SK-N-SH (cell line): ENCODE measurements at regions of chr3 and their contacts with region 1.

Region 1: DNA sequence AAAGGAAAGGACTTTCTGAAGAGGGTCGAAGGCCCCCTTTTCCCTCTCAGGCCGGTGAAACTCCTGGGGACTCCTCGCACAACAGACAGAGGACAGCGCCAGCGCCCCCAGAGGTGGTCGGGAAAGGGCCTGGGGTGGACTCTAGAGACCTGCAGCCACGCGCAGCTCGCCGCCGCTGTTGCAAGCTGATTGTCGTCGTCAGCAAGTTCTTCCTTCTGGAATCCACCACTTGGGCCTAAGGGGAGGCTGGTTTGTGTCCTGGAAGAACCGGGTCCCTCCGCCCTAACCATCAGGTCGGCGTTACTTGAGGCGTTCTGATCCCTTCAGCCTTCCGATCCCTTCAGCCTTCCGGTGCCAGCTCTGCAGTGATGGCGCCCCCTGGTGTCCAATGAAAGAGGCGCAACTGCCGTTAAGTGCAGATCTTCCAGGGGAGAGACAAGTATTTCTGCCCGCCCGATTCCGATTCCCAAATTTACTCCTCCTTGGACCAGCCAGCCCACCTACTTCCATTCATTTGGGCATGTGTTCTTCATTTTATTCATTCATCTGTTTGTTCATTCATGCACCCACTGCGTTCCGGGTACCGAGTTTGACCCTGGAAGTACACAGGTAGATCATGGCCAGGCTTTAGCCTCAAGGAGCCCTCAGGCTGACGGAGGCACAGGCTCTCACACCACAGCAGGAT is 77.2 kb upstream of the SLC6A11 start:
- DNase-seq: peak; percentile 81
- H3K4me3 ChIP-seq: peak overlapping the region; percentile 45 to 59; a peak in 3 of 4 replicates
- H3K27ac ChIP-seq: no peak overlapping the region
- H3K4me1 ChIP-seq: peaks cover 0 to 5% of the 10 kb centered on the region in 2 experiments; a peak in 1 of 4 replicates
- H3K27me3 ChIP-seq: no peaks in the 10 kb centered on the region
- CTCF ChIP-seq: peak; percentile 84
- EP300 ChIP-seq: no peak
- RAD21 ChIP-seq: peak; percentile 71

Region 2: GRCh38 chr3:10334459-10334858 is 404.4 kb before region 1 on chr3:
- CTCF ChIA-PET with region 1: interaction called, 166 read pairs
- POLR2A ChIA-PET with region 1: no interaction called
- DNase-seq: no peak
- H3K4me3 ChIP-seq: no peak overlapping the region
- H3K27ac ChIP-seq: no peak overlapping the region
- H3K4me1 ChIP-seq: no peaks in the 10 kb centered on the region
- H3K27me3 ChIP-seq: peaks cover 32% of the 10 kb centered on the region; the same call in 1 of the 2 replicates
- CTCF ChIP-seq: no peak; the same call in 1 of the 2 replicates
- EP300 ChIP-seq: no peak
- RAD21 ChIP-seq: no peak

Region 3: GRCh38 chr3:10408680-10409079 is 330.1 kb before region 1 on chr3:
- CTCF ChIA-PET with region 1: interaction called, 133 read pairs
- POLR2A ChIA-PET with region 1: no interaction called
- DNase-seq: no peak
- H3K4me3 ChIP-seq: no peak overlapping the region
- H3K27ac ChIP-seq: no peak overlapping the region
- H3K4me1 ChIP-seq: no peaks in the 10 kb centered on the region
- H3K27me3 ChIP-seq: no peaks in the 10 kb centered on the region
- CTCF ChIP-seq: no peak
- EP300 ChIP-seq: no peak
- RAD21 ChIP-seq: no peak

Region 4: GRCh38 chr3:10432156-10432845 is 306.5 kb before region 1 on chr3:
- CTCF ChIA-PET with region 1: interaction called, 11 read pairs
- POLR2A ChIA-PET with region 1: no interaction called
- DNase-seq: peak; percentile 83
- H3K4me3 ChIP-seq: no peak overlapping the region
- H3K27ac ChIP-seq: peak overlapping the region in 1 of 2 experiments; percentile 95; a peak in 2 of 4 replicates
- H3K4me1 ChIP-seq: peaks cover under 1 to 18% of the 10 kb centered on the region in 2 experiments; a peak in 2 of 4 replicates
- H3K27me3 ChIP-seq: no peaks in the 10 kb centered on the region
- CTCF ChIP-seq: no peak
- EP300 ChIP-seq: peak in 1 of 2 experiments; percentile 91; a peak in 2 of 4 replicates
- RAD21 ChIP-seq: no peak

Region 5: GRCh38 chr3:10619989-10620832 is 118.6 kb before region 1 on chr3:
- CTCF ChIA-PET with region 1: interaction called, 16 read pairs
- POLR2A ChIA-PET with region 1: no interaction called
- DNase-seq: peak; percentile 73
- H3K4me3 ChIP-seq: no peak overlapping the region
- H3K27ac ChIP-seq: no peak overlapping the region
- H3K4me1 ChIP-seq: peaks cover 0 to 9% of the 10 kb centered on the region in 2 experiments; a peak in 1 of 4 replicates
- H3K27me3 ChIP-seq: no peaks in the 10 kb centered on the region
- CTCF ChIP-seq: no peak
- EP300 ChIP-seq: no peak
- RAD21 ChIP-seq: peak; percentile 63

Region 6: GRCh38 chr3:10703875-10704274 is 35.0 kb before region 1 on chr3:
- CTCF ChIA-PET with region 1: interaction called, 174 read pairs
- POLR2A ChIA-PET with region 1: no interaction called
- DNase-seq: peak; percentile 46
- H3K4me3 ChIP-seq: peak overlapping the region in 1 of 2 experiments; percentile 29; a peak in 1 of 4 replicates
- H3K27ac ChIP-seq: no peak overlapping the region
- H3K4me1 ChIP-seq: peaks cover 0 to 8% of the 10 kb centered on the region in 2 experiments; a peak in 1 of 4 replicates
- H3K27me3 ChIP-seq: peaks cover 18% of the 10 kb centered on the region; the same call in 1 of the 2 replicates
- CTCF ChIP-seq: peak; percentile 41; the same call in 1 of the 2 replicates
- EP300 ChIP-seq: no peak
- RAD21 ChIP-seq: peak; percentile 62

Region 7: DNA sequence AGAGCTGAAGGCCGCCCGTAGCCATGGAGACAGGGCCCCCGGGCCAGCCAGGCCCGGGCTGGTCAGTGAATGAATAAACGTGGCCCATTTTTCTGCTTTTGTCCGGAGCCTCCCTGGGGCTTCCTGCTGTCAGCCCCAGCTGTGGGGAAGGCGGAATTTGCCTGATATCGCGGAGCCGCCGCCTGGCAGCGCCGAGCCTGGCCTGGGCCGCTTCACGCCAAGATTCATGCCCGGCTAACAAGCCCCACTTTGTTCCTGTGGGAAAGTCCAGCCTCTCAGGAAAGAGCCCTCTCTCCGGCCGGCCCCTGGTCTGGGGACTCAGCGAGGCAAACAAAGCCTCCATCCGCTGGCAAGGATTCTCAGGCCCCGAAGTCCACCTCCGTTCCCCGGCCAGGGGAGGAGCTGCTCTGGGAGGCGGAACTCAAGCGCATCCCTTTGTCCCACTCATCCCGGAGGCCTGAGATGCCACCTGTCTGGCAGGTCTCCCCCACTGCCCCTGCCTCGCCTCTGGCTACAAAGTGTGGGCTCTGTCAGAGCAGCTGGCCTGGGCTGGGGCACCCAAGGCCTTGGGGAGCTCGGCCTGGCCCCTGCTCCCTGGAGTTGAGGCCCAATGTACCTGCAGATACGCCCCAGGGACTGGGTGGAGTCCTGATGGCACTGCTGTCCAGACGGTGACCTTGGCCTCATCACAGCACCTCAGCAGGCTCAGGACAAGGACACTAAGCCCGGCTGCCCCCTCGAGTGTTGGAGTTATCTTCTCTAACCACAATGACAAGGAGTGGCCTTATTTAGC is 25.6 kb after region 1 on chr3:
- CTCF ChIA-PET with region 1: interaction called, 12 read pairs
- POLR2A ChIA-PET with region 1: no interaction called
- DNase-seq: no peak
- H3K4me3 ChIP-seq: no peak overlapping the region
- H3K27ac ChIP-seq: no peak overlapping the region
- H3K4me1 ChIP-seq: no peaks in the 10 kb centered on the region
- H3K27me3 ChIP-seq: no peaks in the 10 kb centered on the region
- CTCF ChIP-seq: no peak
- EP300 ChIP-seq: no peak
- RAD21 ChIP-seq: no peak